B cell (primary cell): ENCODE measurements at regions of chr16 and their contacts with region 1.

Region 1: DNA sequence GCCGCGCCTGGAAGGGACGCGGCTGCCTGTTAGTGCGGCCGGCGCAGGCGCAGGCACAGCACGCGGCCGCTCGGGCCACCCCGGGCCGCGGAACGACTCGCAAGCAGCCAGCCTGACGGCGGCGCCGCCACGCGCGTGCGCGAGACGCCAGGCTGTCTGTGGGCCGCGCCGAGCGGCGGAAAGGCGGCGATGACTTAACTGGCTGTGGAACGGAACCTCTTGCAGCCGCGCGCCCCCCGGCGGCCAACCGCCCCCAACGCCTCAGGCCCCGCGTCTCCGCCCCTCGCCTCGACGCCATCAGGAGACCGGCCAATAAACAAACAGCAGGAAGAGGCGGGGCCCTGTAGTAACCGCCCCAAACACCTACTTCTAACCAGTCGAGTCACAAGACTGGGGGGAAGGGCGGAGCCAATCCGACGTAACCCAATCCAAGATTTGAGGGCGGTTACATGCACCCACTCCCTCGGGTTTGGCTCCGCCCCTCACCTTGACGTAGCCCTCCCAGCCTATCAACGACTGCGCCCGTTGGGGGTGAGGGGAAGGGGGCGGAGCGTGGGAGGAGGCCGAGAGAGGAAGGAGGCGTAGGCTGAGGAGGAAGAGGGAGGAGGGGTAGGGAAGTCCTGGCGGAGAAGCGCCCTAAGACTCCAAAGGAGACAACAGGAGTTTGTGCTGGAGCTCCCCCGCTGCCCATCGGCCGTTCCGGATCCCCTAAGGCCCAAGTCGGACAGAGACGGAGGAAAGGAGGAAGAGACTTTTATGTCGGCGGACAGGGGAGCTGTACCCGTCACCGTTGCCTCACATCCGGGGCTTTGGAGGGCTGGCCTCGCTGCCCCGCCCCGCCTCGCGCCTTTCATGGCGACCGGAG is at the start of gene FBRS:
- DNase-seq: peak; percentile 100
- ATAC-seq: peak; percentile 76
- H3K4me3 ChIP-seq: peak within 1 kb of the TSS; percentile 49 to 90 (median 79)
- H3K4me3 Mint-ChIP-seq: peak within 1 kb of the TSS; percentile 97
- H3K27ac ChIP-seq: peak within 1 kb of the TSS; percentile 88 to 98
- H3K27ac Mint-ChIP-seq: peak within 1 kb of the TSS; percentile 100
- H3K4me1 ChIP-seq: peaks cover 30 to 44% of the 10 kb centered on the region in 2 donors
- H3K4me1 Mint-ChIP-seq: peaks cover 30% of the 10 kb centered on the region
- H3K27me3 ChIP-seq: no peaks in the 10 kb centered on the region
- H3K27me3 Mint-ChIP-seq: no peaks in the 10 kb centered on the region
- CTCF ChIP-seq: peak; percentile 81
- total RNA-seq, gene FBRS: 191 and 194 TPM in 2 replicates

Region 2: DNA sequence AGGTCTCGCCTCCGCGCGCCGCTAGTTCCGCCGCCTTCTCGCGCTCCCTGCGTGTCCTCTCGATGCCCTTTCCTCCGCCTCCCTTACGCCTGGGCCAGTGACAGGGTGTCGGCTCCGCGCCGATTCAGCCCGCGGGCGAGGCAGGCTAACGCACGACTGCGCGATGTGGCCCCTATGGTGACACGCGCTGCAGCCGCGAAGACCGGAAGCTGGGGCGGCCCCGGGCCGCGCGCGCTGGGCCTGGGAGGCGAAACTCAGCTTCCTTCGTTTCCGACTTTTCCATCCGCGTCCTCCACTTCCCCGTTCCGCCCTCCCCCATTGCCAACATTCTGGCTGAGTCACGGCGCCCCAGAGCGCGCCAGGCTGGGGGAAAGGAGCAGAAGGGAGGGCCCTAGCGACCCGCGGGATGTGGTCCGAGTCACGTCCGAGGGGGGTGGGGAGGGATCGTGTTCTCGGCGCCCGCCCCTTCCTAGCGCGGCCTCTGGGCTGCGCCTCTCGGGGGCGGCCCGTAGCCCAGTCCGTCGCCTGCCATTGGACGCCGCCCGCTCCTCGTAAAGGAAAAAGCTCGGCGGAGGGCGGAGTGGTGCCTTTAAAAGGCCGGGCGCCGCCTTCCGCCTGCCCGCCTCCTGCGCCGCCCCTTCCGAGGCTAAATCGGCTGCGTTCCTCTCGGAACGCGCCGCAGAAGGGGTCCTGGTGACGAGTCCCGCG is 592.8 kb before region 1 on chr16 and contains the start of gene ALDOA:
- CTCF ChIA-PET with region 1: no interaction called
- POLR2A ChIA-PET with region 1: interaction called, 4 read pairs
- intact Hi-C with region 1: loop called (anchors 1 kb)
- DNase-seq: peak; percentile 97
- ATAC-seq: peak; percentile 83
- H3K4me3 ChIP-seq: peak within 1 kb of the TSS; percentile 73 to 96 (median 87)
- H3K4me3 Mint-ChIP-seq: peak within 1 kb of the TSS; percentile 100
- H3K27ac ChIP-seq: peak within 1 kb of the TSS; percentile 82 to 88
- H3K27ac Mint-ChIP-seq: peak within 1 kb of the TSS; percentile 99
- H3K4me1 ChIP-seq: peaks cover 16 to 42% of the 10 kb centered on the region in 2 donors
- H3K4me1 Mint-ChIP-seq: peaks cover 31% of the 10 kb centered on the region
- H3K27me3 ChIP-seq: no peaks in the 10 kb centered on the region
- H3K27me3 Mint-ChIP-seq: no peaks in the 10 kb centered on the region
- CTCF ChIP-seq: no peak
- total RNA-seq, gene ALDOA: 301 and 329 TPM in 2 replicates

Region 3: DNA sequence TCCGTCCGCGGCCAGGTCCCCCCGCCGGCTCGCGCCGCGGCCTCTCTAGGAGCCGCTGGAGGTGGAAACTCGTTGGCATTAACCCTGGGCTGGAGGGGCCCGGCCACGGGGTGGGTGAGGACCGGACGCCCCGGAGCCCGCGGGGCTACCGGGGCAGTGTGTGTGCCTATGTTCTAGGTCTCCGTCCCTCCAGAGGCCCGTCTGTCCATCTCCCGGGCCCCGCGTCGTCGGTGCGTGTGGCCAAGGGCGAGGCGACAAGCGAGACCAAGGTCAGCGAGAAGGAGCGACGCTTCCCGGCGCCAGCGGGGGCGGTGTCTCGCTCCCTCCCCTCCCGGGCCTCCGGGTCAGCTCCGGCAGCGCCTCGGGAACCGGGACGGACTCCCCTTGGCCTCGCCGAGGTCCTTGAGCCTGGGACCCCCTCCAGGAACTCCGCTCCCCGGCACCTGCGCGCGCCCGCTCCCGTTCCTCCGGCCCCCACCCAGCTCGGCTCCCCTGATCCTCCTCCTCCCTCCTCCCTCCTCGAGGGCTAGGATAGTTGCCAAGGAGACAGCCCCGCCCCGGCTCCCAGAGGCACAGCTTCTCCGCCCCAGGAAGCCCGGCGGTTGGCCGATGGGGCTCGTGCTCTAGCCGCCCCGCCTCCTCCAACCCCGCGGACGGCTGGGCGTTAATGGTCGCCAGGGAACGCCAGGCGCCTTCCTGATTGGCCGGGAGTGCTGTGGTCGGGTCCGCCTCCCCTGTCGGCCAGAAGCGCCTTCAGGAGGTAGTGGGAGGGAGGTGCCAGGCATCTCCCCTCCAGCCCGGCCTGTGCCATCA is 131.1 kb before region 1 on chr16:
- CTCF ChIA-PET with region 1: no interaction called
- POLR2A ChIA-PET with region 1: interaction called, 10 read pairs
- intact Hi-C with region 1: loop called (anchors 1 kb)
- DNase-seq: peak; percentile 94
- ATAC-seq: peak; percentile 82
- H3K4me3 ChIP-seq: peak overlapping the region; percentile 59 to 97 (median 82)
- H3K4me3 Mint-ChIP-seq: peak overlapping the region; percentile 88
- H3K27ac ChIP-seq: peak overlapping the region; percentile 87 to 89
- H3K27ac Mint-ChIP-seq: peak overlapping the region; percentile 96
- H3K4me1 ChIP-seq: peaks cover 13 to 30% of the 10 kb centered on the region in 2 donors
- H3K4me1 Mint-ChIP-seq: peaks cover 20% of the 10 kb centered on the region
- H3K27me3 ChIP-seq: no peaks in the 10 kb centered on the region
- H3K27me3 Mint-ChIP-seq: no peaks in the 10 kb centered on the region
- CTCF ChIP-seq: peak; percentile 6

Region 4: DNA sequence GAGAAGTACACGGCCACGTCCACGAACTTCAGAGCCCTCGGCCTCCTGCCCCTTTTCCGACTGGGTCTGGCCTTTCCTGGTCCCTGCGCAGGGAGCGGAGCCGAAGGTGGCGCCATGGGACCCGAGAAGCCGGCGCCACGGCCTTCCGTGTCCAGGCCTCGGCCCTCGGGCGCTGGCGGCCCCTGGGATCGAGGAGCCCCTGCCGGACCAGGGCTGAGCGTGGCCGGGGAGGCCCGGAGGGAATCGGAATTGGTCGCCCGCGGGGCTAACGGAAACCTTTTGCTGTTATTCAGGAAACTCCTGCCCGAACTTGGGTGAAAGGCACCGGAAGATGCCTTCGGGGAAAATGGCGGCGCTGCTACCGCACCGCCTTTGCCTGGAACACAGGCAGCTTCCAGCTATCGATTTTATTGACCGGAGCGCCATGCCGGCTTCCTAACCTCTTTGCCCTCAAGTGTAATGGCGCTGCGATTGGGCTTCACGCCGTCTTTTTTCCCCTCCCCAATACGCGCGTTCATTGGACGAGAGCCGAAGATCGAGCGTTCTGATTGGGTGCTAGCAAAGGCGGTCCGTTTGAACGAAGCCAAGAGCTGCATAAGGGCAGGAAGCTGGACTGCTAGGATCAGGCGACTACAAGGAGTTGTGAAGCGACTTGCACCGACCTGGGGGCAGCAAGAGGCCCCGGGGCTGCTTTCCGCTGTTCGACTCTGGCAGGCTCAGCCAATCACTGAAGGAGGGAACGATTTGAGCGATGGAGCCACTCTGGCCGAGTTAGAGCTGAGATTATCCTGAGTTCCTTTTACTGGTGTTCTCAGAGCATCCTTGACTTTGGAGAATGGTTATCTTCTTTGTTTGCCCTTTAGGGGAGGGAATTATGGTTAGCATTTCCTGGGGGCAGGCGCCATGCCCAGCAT is 47.9 kb before region 1 on chr16 and contains the start of gene ZNF689:
- CTCF ChIA-PET with region 1: no interaction called
- POLR2A ChIA-PET with region 1: no interaction called
- intact Hi-C with region 1: loop called (anchors 1 kb)
- DNase-seq: peak; percentile 97
- ATAC-seq: peak; percentile 88
- H3K4me3 ChIP-seq: peak within 1 kb of the TSS; percentile 84 to 98 (median 91)
- H3K4me3 Mint-ChIP-seq: peak within 1 kb of the TSS; percentile 98
- H3K27ac ChIP-seq: peak within 1 kb of the TSS; percentile 82 to 96
- H3K27ac Mint-ChIP-seq: peak within 1 kb of the TSS; percentile 96
- H3K4me1 ChIP-seq: peaks cover 14 to 24% of the 10 kb centered on the region in 2 donors
- H3K4me1 Mint-ChIP-seq: peaks cover 21% of the 10 kb centered on the region
- H3K27me3 ChIP-seq: no peaks in the 10 kb centered on the region
- H3K27me3 Mint-ChIP-seq: no peaks in the 10 kb centered on the region
- CTCF ChIP-seq: no peak
- total RNA-seq, gene ZNF689: 11.9 and 12.4 TPM in 2 replicates

Region 5: DNA sequence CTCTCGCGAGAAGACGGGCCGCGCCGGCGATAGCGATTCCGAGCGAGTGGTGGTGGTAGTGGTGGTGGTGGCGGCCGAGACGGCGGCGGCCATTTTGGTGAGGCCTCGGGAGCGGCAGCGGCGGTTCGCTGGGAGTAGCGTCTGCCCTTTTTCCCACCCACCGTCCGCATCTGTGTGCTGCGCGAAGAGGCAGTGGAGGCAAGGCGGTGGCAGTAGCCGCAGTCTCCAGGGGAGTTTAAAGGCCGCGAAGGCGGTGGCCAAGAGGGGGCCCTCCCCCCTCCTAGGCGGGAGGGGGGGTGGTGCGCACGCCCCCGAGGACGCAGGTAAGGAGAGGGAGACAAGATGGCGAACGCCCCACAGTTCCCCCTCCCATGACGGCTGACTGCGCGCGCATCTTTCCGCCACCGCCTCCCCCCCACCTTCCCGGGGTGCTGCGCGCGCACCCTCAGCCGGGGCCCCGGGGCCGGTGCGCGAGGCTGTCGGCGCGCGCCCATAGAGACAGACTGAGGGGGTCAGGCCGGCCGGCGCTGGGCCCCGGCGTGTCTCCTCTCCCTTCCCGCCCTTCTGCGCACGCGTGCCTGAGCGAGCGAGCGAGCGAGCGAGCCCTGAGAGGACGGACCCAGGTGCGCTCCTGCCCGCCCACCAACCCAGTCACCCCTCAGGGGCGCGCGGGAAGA is 40.2 kb after region 1 on chr16:
- CTCF ChIA-PET with region 1: interaction called, 38 read pairs
- POLR2A ChIA-PET with region 1: interaction called, 41 read pairs
- intact Hi-C with region 1: loop called (anchors 1 kb)
- DNase-seq: peak; percentile 99
- ATAC-seq: peak; percentile 75
- H3K4me3 ChIP-seq: peak overlapping the region in 4 of 5 experiments; percentile 95 to 100 (median 97)
- H3K4me3 Mint-ChIP-seq: peak overlapping the region; percentile 95
- H3K27ac ChIP-seq: peak overlapping the region; percentile 100
- H3K27ac Mint-ChIP-seq: peak overlapping the region; percentile 100
- H3K4me1 ChIP-seq: peaks cover 19 to 25% of the 10 kb centered on the region in 2 donors
- H3K4me1 Mint-ChIP-seq: peaks cover 29% of the 10 kb centered on the region
- H3K27me3 ChIP-seq: no peaks in the 10 kb centered on the region
- H3K27me3 Mint-ChIP-seq: no peaks in the 10 kb centered on the region
- CTCF ChIP-seq: no peak

Region 6: GRCh38 chr16:30740364-30741251 is 82.5 kb after region 1 on chr16:
- CTCF ChIA-PET with region 1: no interaction called
- POLR2A ChIA-PET with region 1: no interaction called
- intact Hi-C with region 1: no loop called
- DNase-seq: no peak
- ATAC-seq: no peak
- H3K4me3 ChIP-seq: no peak overlapping the region
- H3K4me3 Mint-ChIP-seq: no peak overlapping the region
- H3K27ac ChIP-seq: peak overlapping the region in 1 of 2 donors; percentile 4
- H3K27ac Mint-ChIP-seq: peak overlapping the region; percentile 26
- H3K4me1 ChIP-seq: no peaks in the 10 kb centered on the region
- H3K4me1 Mint-ChIP-seq: peaks cover 5% of the 10 kb centered on the region
- H3K27me3 ChIP-seq: no peaks in the 10 kb centered on the region
- H3K27me3 Mint-ChIP-seq: no peaks in the 10 kb centered on the region
- CTCF ChIP-seq: no peak

Region 7: DNA sequence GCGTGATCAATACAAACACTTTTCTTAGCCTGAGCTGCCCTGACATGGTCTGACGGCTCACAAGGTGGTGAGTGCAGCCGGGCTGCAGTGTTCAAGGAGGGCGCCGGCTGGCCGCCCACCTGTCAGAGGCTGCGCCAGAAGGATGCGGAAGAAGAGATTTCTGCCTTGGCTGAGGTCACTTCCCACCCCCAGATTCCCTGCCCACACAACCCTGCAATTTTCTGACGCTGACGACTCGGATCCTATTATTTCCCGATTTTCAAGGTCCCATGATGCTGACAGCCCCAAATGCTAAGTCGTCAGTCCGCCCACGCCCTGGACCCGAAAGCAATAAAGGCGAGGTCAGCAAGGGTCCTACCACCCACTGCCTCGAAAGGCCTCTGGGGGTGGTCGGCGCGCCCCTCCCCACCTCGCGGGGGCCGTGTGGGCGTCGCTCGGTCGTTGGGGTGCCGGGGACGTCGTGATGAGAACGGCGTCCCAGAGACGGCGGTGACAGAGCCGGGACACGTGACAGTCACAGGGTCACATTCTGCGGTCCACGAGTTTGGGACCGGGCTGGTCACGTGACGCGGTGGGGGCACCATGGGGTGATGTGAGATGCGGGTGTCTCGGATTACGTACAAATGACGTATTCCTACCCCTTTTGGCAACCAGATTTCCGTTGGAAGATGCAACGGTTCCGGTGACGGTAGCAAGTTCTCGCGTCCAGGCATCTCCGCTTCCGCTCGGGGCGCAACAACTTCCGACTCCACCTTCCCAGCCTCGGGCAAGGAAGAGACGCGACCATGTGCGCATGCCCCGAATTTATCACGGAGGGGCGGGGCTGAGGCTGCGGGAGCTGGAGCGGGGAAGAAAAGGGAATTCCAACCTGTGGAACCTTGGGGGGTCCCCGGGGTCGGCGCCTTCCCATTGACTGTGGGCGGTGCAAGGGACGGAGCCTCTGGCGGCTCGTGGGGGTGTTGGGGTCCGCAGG is 374.9 kb after region 1 on chr16 and contains the start of gene STX4:
- CTCF ChIA-PET with region 1: no interaction called
- POLR2A ChIA-PET with region 1: no interaction called
- intact Hi-C with region 1: loop called (anchors 5 kb)
- DNase-seq: peak; percentile 100
- ATAC-seq: peak; percentile 76
- H3K4me3 ChIP-seq: peak within 1 kb of the TSS; percentile 76 to 99 (median 90)
- H3K4me3 Mint-ChIP-seq: peak within 1 kb of the TSS; percentile 95
- H3K27ac ChIP-seq: peak within 1 kb of the TSS; percentile 99 to 100
- H3K27ac Mint-ChIP-seq: peak within 1 kb of the TSS; percentile 99
- H3K4me1 ChIP-seq: peaks cover 8 to 16% of the 10 kb centered on the region in 2 donors
- H3K4me1 Mint-ChIP-seq: peaks cover 21% of the 10 kb centered on the region
- H3K27me3 ChIP-seq: no peaks in the 10 kb centered on the region
- H3K27me3 Mint-ChIP-seq: no peaks in the 10 kb centered on the region
- CTCF ChIP-seq: no peak
- total RNA-seq, gene STX4: 111 and 120 TPM in 2 replicates